Activated CD4-positive, alpha-beta T cell treated with anti-CD3 and anti-CD28 coated beads for 36 hours (primary cell): ENCODE measurements at regions of chr3 and their contacts with region 1.

Region 1: GRCh38 chr3:142828703-142829305 is 60.1 kb downstream of the PCOLCE2 start:
- DNase-seq: peak; percentile 89
- ATAC-seq: peak; percentile 100
- H3K4me3 Mint-ChIP-seq: no peak overlapping the region
- H3K27ac Mint-ChIP-seq: no peak overlapping the region
- H3K4me1 Mint-ChIP-seq: no peaks in the 10 kb centered on the region
- H3K27me3 Mint-ChIP-seq: peaks cover 12% of the 10 kb centered on the region

Region 2: GRCh38 chr3:142481196-142481595 is 347.6 kb before region 1 on chr3:
- CTCF ChIA-PET with region 1: no interaction called
- POLR2A ChIA-PET with region 1: no interaction called
- intact Hi-C with region 1: no loop called
- DNase-seq: no peak
- ATAC-seq: no peak
- H3K4me3 Mint-ChIP-seq: no peak overlapping the region
- H3K27ac Mint-ChIP-seq: no peak overlapping the region
- H3K4me1 Mint-ChIP-seq: peaks cover 7% of the 10 kb centered on the region
- H3K27me3 Mint-ChIP-seq: no peaks in the 10 kb centered on the region

Region 3: GRCh38 chr3:142586803-142587406 is 241.9 kb before region 1 on chr3:
- CTCF ChIA-PET with region 1: interaction called, 9 read pairs
- POLR2A ChIA-PET with region 1: no interaction called
- intact Hi-C with region 1: loop called in 1 of 2 experiments (anchors 5 kb)
- DNase-seq: peak; percentile 21
- ATAC-seq: peak; percentile 69
- H3K4me3 Mint-ChIP-seq: no peak overlapping the region
- H3K27ac Mint-ChIP-seq: no peak overlapping the region
- H3K4me1 Mint-ChIP-seq: no peaks in the 10 kb centered on the region
- H3K27me3 Mint-ChIP-seq: peaks cover 2% of the 10 kb centered on the region

Region 4: GRCh38 chr3:142746646-142747045 is 82.2 kb before region 1 on chr3:
- CTCF ChIA-PET with region 1: no interaction called
- POLR2A ChIA-PET with region 1: no interaction called
- intact Hi-C with region 1: no loop called
- DNase-seq: no peak
- ATAC-seq: no peak
- H3K4me3 Mint-ChIP-seq: no peak overlapping the region
- H3K27ac Mint-ChIP-seq: no peak overlapping the region
- H3K4me1 Mint-ChIP-seq: no peaks in the 10 kb centered on the region
- H3K27me3 Mint-ChIP-seq: no peaks in the 10 kb centered on the region

Region 5: DNA sequence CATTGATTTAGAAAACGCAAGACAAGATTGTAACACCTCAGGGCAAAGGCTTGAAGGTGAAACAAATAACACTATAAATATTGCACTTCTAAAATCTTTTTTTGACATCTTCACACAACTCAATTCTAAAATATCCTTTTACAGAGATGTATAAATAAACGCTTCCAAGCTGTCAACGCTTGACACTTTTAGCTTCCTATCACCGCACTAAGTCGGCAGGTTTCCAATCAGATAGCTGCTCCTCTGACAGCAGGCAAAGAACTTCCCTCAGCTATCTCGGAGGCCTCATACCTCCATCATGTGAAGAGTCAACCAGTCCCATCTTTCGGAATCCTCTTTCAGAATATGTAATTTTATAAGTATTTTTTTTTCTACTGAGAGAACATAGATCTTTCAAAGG is 10.9 kb before region 1 on chr3:
- CTCF ChIA-PET with region 1: interaction called, 21 read pairs
- POLR2A ChIA-PET with region 1: no interaction called
- intact Hi-C with region 1: no loop called
- DNase-seq: no peak
- ATAC-seq: no peak
- H3K4me3 Mint-ChIP-seq: no peak overlapping the region
- H3K27ac Mint-ChIP-seq: no peak overlapping the region
- H3K4me1 Mint-ChIP-seq: no peaks in the 10 kb centered on the region
- H3K27me3 Mint-ChIP-seq: peaks cover 2% of the 10 kb centered on the region

Region 6: GRCh38 chr3:142853270-142854168 is 24.7 kb after region 1 on chr3:
- CTCF ChIA-PET with region 1: interaction called, 13 read pairs
- POLR2A ChIA-PET with region 1: interaction called, 3 read pairs
- intact Hi-C with region 1: no loop called
- DNase-seq: no peak
- ATAC-seq: no peak
- H3K4me3 Mint-ChIP-seq: no peak overlapping the region
- H3K27ac Mint-ChIP-seq: no peak overlapping the region
- H3K4me1 Mint-ChIP-seq: no peaks in the 10 kb centered on the region
- H3K27me3 Mint-ChIP-seq: peaks cover 4% of the 10 kb centered on the region

Region 7: GRCh38 chr3:142904639-142905436 is 76.0 kb after region 1 on chr3:
- CTCF ChIA-PET with region 1: interaction called, 7 read pairs
- POLR2A ChIA-PET with region 1: no interaction called
- intact Hi-C with region 1: loop called in 1 of 2 experiments (anchors 2 kb)
- DNase-seq: no peak
- ATAC-seq: no peak
- H3K4me3 Mint-ChIP-seq: no peak overlapping the region
- H3K27ac Mint-ChIP-seq: no peak overlapping the region
- H3K4me1 Mint-ChIP-seq: peaks cover 5% of the 10 kb centered on the region
- H3K27me3 Mint-ChIP-seq: peaks cover 25% of the 10 kb centered on the region

Region 8: GRCh38 chr3:142987080-142987700 is 158.4 kb after region 1 on chr3:
- CTCF ChIA-PET with region 1: interaction called, 36 read pairs
- POLR2A ChIA-PET with region 1: no interaction called
- intact Hi-C with region 1: loop called (anchors 1 to 2 kb)
- DNase-seq: no peak
- ATAC-seq: peak; percentile 51
- H3K4me3 Mint-ChIP-seq: no peak overlapping the region
- H3K27ac Mint-ChIP-seq: no peak overlapping the region
- H3K4me1 Mint-ChIP-seq: no peaks in the 10 kb centered on the region
- H3K27me3 Mint-ChIP-seq: peaks cover 14% of the 10 kb centered on the region

Region 9: GRCh38 chr3:143001369-143002082 is 172.7 kb after region 1 on chr3 and contains the start of gene U2SURP:
- CTCF ChIA-PET with region 1: interaction called, 65 read pairs
- POLR2A ChIA-PET with region 1: no interaction called
- intact Hi-C with region 1: no loop called
- DNase-seq: peak; percentile 96
- ATAC-seq: peak; percentile 86
- H3K4me3 Mint-ChIP-seq: peak within 1 kb of the TSS; percentile 91
- H3K27ac Mint-ChIP-seq: peak within 1 kb of the TSS; percentile 99
- H3K4me1 Mint-ChIP-seq: peaks cover 40% of the 10 kb centered on the region
- H3K27me3 Mint-ChIP-seq: no peaks in the 10 kb centered on the region
- total RNA-seq, gene U2SURP: 208 to 248 TPM

Region 10: DNA sequence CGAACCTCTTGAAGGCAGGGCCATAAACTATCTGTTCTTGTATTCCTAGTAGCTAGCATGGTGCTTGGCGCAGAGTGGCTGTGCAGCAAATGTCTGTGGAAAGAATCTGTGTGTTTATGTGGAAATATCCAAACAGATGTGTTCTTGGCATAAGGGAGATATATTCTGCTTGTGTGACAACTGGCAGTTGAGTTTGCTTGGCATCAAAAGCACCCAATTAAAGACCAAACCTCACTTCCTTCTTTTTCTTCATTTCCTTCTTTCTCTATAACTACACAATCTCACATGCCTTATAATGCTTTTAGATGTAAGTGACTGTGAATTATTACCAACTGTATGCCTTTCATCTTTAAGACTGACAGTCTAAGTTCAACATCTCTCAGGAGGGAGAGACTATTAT is 723.0 kb after region 1 on chr3:
- CTCF ChIA-PET with region 1: no interaction called
- POLR2A ChIA-PET with region 1: no interaction called
- intact Hi-C with region 1: no loop called
- DNase-seq: no peak
- ATAC-seq: no peak
- H3K4me3 Mint-ChIP-seq: no peak overlapping the region
- H3K27ac Mint-ChIP-seq: no peak overlapping the region
- H3K4me1 Mint-ChIP-seq: no peaks in the 10 kb centered on the region
- H3K27me3 Mint-ChIP-seq: no peaks in the 10 kb centered on the region